ENCODE measurements at regions of chr9 and their contacts with region 1.

Region 1: DNA sequence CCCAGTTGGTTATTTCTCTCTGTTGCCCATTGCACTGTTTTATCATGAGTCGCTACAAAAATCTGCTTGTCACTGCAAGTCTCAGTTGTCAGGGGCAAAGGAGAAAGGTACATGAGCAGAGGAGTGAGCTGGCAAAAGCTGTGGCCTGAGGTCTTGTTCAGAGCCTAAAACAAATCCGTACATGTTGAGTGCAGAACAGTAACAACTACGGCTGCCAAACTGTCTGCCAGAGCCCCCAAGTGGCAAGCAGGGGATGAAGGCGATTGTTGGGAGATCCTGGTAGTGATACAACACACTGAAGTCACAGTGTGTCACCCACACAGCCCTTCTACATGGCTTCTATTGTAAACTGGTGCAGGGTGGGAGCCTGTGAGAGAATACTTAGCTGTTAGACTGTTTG is 50.9 kb downstream of the BRINP1 start:
- DNase-seq: no peak

Region 2: GRCh38 chr9:120513825-120514396 is 1195.5 kb after region 1 on chr9:
- intact Hi-C with region 1: loop called in 1 of 2 experiments (anchors 5 kb)
- DNase-seq: no peak

Measured in posterior vena cava (tissue), 2 donors.